H1 (cell line): ENCODE measurements at regions of chr6 and their contacts with region 1.

Region 1: DNA sequence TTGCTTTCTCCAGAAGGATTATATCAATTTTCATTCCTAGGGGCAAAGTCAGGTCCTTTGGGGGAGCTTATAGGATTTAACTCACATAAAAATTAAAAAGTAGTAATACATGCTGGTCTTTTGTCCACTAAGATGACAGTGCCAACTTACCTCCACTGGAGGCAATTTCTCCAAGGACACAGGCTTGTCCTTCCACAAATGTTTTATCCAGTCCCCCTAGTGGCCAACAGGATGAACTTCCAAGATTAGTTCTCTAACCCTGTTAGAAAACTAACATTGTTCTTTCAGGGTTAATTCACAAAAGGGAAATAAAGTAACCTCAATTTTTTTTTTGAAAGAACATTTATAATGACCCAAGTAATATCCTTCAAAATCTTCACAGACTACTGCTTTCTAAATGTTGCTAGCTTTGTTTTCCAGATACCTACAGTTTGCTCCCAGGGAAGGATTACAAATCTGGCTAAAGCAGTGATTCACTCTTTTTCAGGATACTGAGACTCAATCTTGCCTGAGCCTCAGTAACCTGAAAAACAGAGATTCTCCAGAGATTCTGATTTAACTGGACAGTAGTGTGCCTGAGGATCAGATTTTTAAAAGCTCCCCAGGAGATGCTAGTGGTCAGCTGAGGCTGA is 31.7 kb upstream of the UBR2 start:
- DNase-seq: no peak
- H3K4me3 ChIP-seq: no peak overlapping the region
- H3K27ac ChIP-seq: no peak overlapping the region
- H3K4me1 ChIP-seq: no peaks in the 10 kb centered on the region
- H3K27me3 ChIP-seq: no peaks in the 10 kb centered on the region
- CTCF ChIP-seq: peak in 2 of 3 experiments; percentile 75 to 93; a peak in 3 of 4 replicates
- EP300 ChIP-seq: no peak
- POLR2A ChIP-seq: no peak
- RAD21 ChIP-seq: peak; percentile 68 to 75

Region 2: DNA sequence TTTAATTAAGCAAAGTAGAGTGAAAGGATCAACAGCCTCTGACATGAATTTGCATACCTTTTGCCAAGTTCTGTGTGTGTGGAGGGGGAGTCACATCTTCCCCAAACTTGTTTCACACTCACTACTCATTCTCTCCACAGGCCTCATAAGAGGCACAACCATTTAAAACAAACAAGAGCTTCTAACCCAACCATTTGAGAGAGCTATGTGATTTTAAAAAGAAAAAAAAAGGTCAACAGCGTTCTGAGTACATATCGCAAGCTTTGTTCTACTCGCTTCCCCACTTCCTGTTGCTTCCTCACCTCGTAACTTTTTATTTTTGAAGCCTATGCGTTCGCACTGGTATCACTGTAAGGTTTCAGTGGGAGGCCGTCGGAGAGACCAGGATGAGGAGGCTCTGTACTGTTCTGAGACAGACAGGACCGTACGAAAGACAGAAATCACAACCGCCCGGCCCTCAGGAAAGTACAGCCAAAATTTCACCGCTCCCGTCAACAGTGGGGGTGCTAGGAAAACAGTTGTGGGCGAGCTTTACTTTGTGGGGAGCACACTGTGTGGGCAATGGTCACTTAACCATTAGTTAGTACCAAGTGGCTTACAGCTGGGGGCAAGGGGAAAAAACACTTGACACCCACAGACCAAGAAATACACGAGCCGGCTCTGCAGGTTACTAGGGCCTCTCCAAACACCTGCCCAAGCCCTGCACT is 141.8 kb before region 1 on chr6:
- CTCF ChIA-PET with region 1: interaction called, 10 read pairs
- POLR2A ChIA-PET with region 1: no interaction called
- DNase-seq: no peak
- H3K4me3 ChIP-seq: no peak overlapping the region
- H3K27ac ChIP-seq: no peak overlapping the region
- H3K4me1 ChIP-seq: peaks cover 3 to 9% (median 8%) of the 10 kb centered on the region in 4 experiments; a peak in 5 of 7 replicates
- H3K27me3 ChIP-seq: no peaks in the 10 kb centered on the region
- CTCF ChIP-seq: no peak
- EP300 ChIP-seq: no peak
- POLR2A ChIP-seq: no peak
- RAD21 ChIP-seq: no peak

Region 3: DNA sequence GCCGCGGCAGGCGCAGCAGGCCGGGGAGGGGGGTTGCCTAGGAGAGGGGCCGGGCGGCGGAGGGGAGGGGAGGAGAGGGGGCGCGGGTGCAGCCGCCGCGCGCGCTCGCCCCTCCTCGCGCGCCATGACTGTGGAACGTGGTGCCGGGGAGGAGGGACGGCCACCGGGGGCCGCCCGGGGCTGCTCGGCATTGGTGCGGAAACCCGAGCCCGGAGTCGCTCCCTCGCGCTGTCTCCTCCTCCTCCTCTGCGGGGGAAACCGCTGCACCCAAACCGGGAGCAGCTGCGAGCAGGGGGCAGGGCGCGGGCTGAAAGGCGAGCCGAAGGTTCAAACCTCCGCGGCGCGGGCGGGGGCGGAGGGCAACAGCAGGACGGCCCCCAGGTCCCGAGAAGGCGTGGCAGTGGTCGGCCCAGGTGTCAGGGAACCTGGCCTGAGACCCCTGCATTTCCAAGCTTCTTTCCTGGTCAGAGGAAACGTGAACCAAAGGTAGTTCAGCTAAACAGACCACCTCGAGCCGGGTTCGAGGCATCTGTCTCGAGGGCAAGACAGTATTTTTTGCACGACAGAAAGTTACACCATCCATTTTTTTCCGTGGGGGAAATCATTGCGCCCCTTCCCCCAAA is 79.0 kb before region 1 on chr6:
- CTCF ChIA-PET with region 1: interaction called, 19 read pairs
- POLR2A ChIA-PET with region 1: no interaction called
- DNase-seq: peak in 1 of 2 experiments; percentile 91
- H3K4me3 ChIP-seq: peak overlapping the region; percentile 73 to 96 (median 94)
- H3K27ac ChIP-seq: peak overlapping the region; percentile 89; the same call in 1 of the 2 replicates
- H3K4me1 ChIP-seq: peaks cover 0 to 26% (median 14%) of the 10 kb centered on the region in 4 experiments; a peak in 6 of 7 replicates
- H3K27me3 ChIP-seq: no peaks in the 10 kb centered on the region; a peak in 1 of 7 replicates
- CTCF ChIP-seq: no peak
- EP300 ChIP-seq: peak in 1 of 2 experiments; percentile 1; a peak in 1 of 3 replicates
- POLR2A ChIP-seq: peak in 1 of 2 experiments; percentile 30; a peak in 2 of 3 replicates
- RAD21 ChIP-seq: 0 out of 4 replicates have a peak, but pooled peaks of 1 of the 2 experiments have one; percentile 15

Region 4: GRCh38 chr6:42493914-42494539 is 38.1 kb before region 1 on chr6:
- CTCF ChIA-PET with region 1: interaction called, 12 read pairs
- POLR2A ChIA-PET with region 1: no interaction called
- DNase-seq: no peak
- H3K4me3 ChIP-seq: no peak overlapping the region
- H3K27ac ChIP-seq: no peak overlapping the region
- H3K4me1 ChIP-seq: no peaks in the 10 kb centered on the region
- H3K27me3 ChIP-seq: no peaks in the 10 kb centered on the region
- CTCF ChIP-seq: no peak
- EP300 ChIP-seq: no peak
- POLR2A ChIP-seq: no peak
- RAD21 ChIP-seq: no peak

Region 5: DNA sequence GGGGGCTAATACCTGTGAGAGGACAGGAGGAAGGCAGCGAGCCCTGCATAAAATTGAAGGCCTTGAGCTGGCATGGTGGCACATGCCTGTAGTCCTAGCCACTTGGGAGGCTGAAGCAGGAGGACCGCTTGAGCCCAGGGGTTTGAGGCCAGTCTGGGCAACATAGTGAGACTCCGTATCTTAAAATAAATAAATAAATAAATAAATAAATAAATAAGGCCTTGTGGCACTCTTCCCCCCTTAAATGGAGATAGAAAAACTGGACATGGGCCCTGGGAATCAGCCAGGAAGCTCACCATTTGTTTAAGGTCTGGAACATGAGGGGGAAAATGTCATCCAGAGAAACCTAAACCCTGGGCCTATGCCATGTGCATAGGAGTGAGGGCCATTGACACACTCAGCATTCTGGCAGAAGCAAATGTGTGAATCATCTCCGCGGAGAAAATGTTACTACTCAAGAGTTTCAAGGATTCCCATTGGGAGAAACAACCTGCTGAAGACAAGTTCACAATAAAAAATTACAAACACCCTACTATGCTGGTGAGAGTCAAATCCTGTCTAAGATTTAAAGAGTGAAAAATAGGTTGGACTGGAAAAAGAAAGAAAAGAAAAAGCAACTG is 20.2 kb before region 1 on chr6:
- CTCF ChIA-PET with region 1: interaction called, 12 read pairs
- POLR2A ChIA-PET with region 1: no interaction called
- DNase-seq: no peak
- H3K4me3 ChIP-seq: no peak overlapping the region
- H3K27ac ChIP-seq: no peak overlapping the region
- H3K4me1 ChIP-seq: no peaks in the 10 kb centered on the region
- H3K27me3 ChIP-seq: no peaks in the 10 kb centered on the region; a peak in 1 of 7 replicates
- CTCF ChIP-seq: no peak
- EP300 ChIP-seq: no peak
- POLR2A ChIP-seq: no peak
- RAD21 ChIP-seq: no peak

Region 6: DNA sequence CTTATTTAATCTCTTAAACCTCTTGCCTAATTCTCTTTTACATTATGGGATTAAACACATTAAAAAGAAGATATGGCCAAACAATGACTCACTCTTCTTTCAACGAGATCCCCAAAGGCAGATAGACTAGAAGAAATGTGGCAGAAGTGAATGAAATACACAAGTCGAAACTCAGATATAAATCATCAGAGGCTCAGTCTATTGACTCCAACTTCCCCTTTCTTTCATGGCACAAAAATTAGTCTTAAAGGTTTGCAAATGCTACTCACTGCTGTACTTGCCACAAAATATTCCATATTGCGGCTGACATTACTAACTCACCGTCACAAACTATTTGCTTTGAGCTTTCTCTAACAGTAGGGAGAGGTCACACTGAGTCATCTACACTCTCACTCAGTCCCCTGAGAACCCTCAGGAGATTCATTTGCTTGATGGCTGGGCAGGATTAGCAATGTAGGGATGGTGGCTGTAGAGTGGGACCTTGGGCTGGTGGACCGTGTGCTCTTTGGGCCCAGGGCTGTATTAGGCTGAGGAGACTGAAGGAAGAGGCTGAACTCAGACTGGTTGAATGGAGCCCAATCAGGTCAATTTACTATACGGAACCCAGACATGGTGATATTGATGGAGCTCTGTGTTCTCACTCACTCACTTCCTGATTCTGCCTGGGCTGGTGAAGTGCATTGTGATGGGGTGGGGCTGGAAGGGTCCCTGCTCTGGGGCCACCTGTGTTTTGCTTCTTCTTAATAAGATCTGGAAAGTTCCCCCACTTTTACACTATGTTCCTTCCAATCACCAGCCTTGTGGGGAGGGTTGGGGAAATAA is 11.2 kb before region 1 on chr6:
- CTCF ChIA-PET with region 1: interaction called, 38 read pairs
- POLR2A ChIA-PET with region 1: no interaction called
- DNase-seq: no peak
- H3K4me3 ChIP-seq: no peak overlapping the region
- H3K27ac ChIP-seq: no peak overlapping the region
- H3K4me1 ChIP-seq: no peaks in the 10 kb centered on the region
- H3K27me3 ChIP-seq: peaks cover 0 to 1% (median 0%) of the 10 kb centered on the region in 4 experiments; a peak in 1 of 7 replicates
- CTCF ChIP-seq: no peak
- EP300 ChIP-seq: no peak
- POLR2A ChIP-seq: no peak
- RAD21 ChIP-seq: no peak